Heart left ventricle (tissue), 16 donors: ENCODE measurements at regions of chr21 and their contacts with region 1.

Region 1: GRCh38 chr21:14554948-14555347 is 8.8 kb upstream of the SAMSN1 start:
- DNase-seq: no peak
- ATAC-seq: no peak
- H3K4me3 ChIP-seq: no peak overlapping the region
- H3K27ac ChIP-seq: no peak overlapping the region
- H3K4me1 ChIP-seq: peaks cover 0 to 10% (median 0%) of the 10 kb centered on the region in 12 donors
- H3K27me3 ChIP-seq: no peaks in the 10 kb centered on the region
- CTCF ChIP-seq: no peak
- POLR2A ChIP-seq: no peak

Region 2: GRCh38 chr21:14956807-14957206 is 401.9 kb after region 1 on chr21:
- intact Hi-C with region 1: no loop called
- DNase-seq: no peak
- ATAC-seq: no peak
- H3K4me3 ChIP-seq: no peak overlapping the region
- H3K27ac ChIP-seq: no peak overlapping the region
- H3K4me1 ChIP-seq: peaks cover 0 to 4% (median 0%) of the 10 kb centered on the region in 12 donors
- H3K27me3 ChIP-seq: no peaks in the 10 kb centered on the region
- CTCF ChIP-seq: no peak
- POLR2A ChIP-seq: no peak

Region 3: GRCh38 chr21:16250273-16250672 is 1695.3 kb after region 1 on chr21:
- intact Hi-C with region 1: loop called in 1 of 10 experiments (anchors 10 kb)
- DNase-seq: no peak
- ATAC-seq: no peak
- H3K4me3 ChIP-seq: no peak overlapping the region
- H3K27ac ChIP-seq: no peak overlapping the region
- H3K4me1 ChIP-seq: no peaks in the 10 kb centered on the region
- H3K27me3 ChIP-seq: no peaks in the 10 kb centered on the region
- CTCF ChIP-seq: no peak
- POLR2A ChIP-seq: no peak